Psoas muscle (tissue), 8 donors: ENCODE measurements at regions of chr1 and their contacts with region 1.

Region 1: DNA sequence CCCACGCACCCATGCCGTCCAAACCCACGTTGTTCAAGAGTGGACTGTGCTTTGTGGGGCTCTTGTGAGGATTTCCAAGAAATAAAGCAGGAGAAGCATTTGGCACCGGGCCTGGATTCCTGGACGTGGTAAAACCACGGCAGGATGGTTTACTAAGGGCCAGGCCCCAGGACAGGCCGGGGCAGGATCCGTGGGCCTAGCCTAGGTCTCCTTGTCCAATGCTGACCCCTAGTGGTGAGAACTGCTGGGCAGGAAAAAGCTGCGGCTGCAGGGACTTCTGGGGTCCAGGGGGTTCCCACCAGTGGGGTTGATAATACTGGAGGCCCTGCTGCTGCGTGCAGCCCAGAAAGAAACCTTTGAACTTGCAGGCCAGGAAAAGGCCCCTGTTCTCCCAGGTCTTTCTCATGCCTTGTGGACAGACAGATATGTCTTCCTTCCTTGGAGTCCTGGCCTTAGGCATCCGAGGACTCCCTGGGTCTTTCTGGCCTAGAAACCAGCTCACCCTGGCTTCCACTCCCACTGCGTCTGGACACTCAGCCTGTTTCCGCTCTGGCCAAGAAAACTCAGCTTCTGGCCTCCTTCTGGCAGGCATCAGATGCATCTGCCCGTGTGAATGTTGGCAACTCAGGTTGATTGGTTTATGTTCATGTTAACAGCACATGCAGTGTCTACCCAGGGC is 106.9 kb upstream of the TMEM51 start:
- DNase-seq: peak; percentile 71 to 75
- ATAC-seq: peak in 3 of 4 donors; percentile 44 to 71 (median 54)
- H3K4me3 ChIP-seq: no peak overlapping the region
- H3K27ac ChIP-seq: no peak overlapping the region
- H3K4me1 ChIP-seq: no peaks in the 10 kb centered on the region
- H3K27me3 ChIP-seq: no peaks in the 10 kb centered on the region
- CTCF ChIP-seq: peak; percentile 78

Region 2: DNA sequence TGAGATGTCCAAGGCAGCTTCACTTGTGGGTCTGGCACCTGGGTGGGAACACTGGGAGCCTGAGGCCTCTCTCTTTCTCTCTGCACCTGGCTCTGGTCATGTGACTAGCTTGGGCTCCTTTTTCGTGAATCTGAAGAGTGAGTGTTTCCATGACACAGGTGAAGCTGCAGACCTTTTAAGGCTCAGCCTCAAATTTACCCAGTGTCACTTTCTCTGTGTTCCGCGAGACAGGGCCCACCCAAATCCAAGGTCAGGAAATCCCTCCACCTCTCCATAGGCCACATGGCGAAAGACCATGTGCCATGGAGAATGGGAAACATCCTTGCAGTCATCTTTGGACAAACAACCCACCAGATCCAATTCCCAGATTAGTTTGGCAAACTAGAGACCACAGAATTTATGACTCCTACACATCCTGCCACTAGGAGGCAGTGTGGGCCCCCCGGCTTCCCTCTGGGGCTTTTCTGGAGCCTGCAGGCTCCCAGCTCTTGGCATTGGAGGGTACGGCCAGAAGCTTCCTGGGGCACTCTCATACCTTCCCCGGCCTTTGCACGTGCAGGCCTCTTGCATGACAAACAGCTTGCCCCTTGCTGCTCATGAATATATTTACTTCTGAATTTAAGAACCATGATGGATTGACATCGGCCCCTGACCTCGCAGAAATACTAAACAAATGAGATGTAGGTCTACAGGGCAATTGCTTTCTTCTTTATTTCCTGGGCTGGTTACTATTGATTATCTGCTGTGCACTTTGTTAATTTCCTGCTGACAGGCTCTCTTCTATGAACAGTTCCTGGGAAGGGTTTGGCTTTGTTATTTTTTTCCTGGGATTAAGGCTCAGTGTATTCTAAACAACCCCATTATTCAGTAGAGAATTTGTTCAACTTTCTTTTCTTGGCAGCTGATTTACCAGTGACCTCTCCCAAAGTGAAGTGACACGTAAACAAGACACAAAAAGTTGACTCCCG is 267.4 kb before region 1 on chr1:
- intact Hi-C with region 1: loop called (anchors 10 kb)
- DNase-seq: peak in 1 of 2 donors; percentile 20
- ATAC-seq: no peak
- H3K4me3 ChIP-seq: no peak overlapping the region
- H3K27ac ChIP-seq: no peak overlapping the region
- H3K4me1 ChIP-seq: no peaks in the 10 kb centered on the region
- H3K27me3 ChIP-seq: no peaks in the 10 kb centered on the region
- CTCF ChIP-seq: peak; percentile 48